Upper lobe of right lung (tissue), 1 donor: ENCODE measurements at regions of chr6 and their contacts with region 1.

Region 1: DNA sequence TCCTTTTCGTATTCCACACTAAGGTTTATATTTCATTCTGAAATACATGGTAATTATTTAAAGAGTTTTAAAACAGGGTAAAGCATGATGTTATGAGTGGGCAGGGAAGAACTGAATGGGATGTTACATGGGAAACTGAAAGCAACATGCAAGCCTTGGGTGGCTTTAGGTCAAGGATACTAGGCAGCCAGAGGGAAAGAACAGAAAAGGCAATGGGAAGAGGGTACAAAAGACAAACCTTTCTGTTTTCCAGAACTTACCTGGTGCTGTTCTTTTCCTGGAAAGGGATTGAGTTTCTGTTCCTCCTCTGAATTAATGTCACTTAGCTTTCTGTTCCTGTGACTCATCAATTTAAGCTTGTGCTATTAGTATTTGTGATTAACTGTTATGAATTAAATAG is 71.2 kb upstream of the SMIM8 start:
- DNase-seq: no peak
- ATAC-seq: no peak
- H3K4me3 ChIP-seq: no peak overlapping the region
- H3K27ac ChIP-seq: no peak overlapping the region
- H3K4me1 ChIP-seq: no peaks in the 10 kb centered on the region
- H3K27me3 ChIP-seq: no peaks in the 10 kb centered on the region
- CTCF ChIP-seq: no peak

Region 2: DNA sequence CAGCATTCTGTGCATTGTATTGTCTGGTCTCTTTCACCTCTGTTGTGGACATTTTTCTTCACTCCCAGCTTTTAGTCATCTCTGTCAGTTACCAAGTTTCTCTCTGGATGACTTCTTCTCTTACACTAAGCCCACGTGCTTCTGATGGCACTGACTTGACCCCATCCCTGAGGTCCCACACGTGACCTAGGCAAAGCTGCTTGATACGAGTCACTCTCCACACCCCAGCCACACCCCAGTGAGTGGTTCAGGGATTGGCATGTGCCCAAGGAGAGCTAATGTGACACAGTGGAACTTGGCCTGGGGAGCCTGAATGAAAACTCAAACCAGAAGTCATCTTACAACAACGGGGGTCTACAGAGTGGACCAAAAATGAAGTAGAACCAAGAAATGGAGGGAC is 281.7 kb before region 1 on chr6:
- intact Hi-C with region 1: no loop called
- DNase-seq: no peak
- ATAC-seq: no peak
- H3K4me3 ChIP-seq: no peak overlapping the region
- H3K27ac ChIP-seq: no peak overlapping the region
- H3K4me1 ChIP-seq: no peaks in the 10 kb centered on the region
- H3K27me3 ChIP-seq: no peaks in the 10 kb centered on the region
- CTCF ChIP-seq: no peak

Region 3: GRCh38 chr6:87139236-87139635 is 112.0 kb before region 1 on chr6:
- intact Hi-C with region 1: loop called (anchors 10 kb)
- DNase-seq: no peak
- ATAC-seq: peak; percentile 92
- H3K4me3 ChIP-seq: no peak overlapping the region
- H3K27ac ChIP-seq: no peak overlapping the region
- H3K4me1 ChIP-seq: no peaks in the 10 kb centered on the region
- H3K27me3 ChIP-seq: peaks cover 5% of the 10 kb centered on the region
- CTCF ChIP-seq: peak; percentile 84

Region 4: GRCh38 chr6:87291883-87292282 is 40.7 kb after region 1 on chr6:
- intact Hi-C with region 1: no loop called
- DNase-seq: no peak
- ATAC-seq: no peak
- H3K4me3 ChIP-seq: no peak overlapping the region
- H3K27ac ChIP-seq: no peak overlapping the region
- H3K4me1 ChIP-seq: no peaks in the 10 kb centered on the region
- H3K27me3 ChIP-seq: peaks cover 17% of the 10 kb centered on the region
- CTCF ChIP-seq: no peak

Region 5: GRCh38 chr6:87472525-87473418 is 221.5 kb after region 1 on chr6 and contains the start of gene SLC35A1:
- intact Hi-C with region 1: no loop called
- DNase-seq: peak; percentile 95
- ATAC-seq: peak; percentile 99
- H3K4me3 ChIP-seq: peak within 1 kb of the TSS; percentile 93
- H3K27ac ChIP-seq: peak within 1 kb of the TSS; percentile 95
- H3K4me1 ChIP-seq: peaks cover 22% of the 10 kb centered on the region
- H3K27me3 ChIP-seq: no peaks in the 10 kb centered on the region
- CTCF ChIP-seq: peak; percentile 37
- total RNA-seq, gene SLC35A1: 48.9 TPM

Region 6: GRCh38 chr6:87600576-87600975 is 349.4 kb after region 1 on chr6:
- intact Hi-C with region 1: no loop called
- DNase-seq: no peak
- ATAC-seq: no peak
- H3K4me3 ChIP-seq: no peak overlapping the region
- H3K27ac ChIP-seq: no peak overlapping the region
- H3K4me1 ChIP-seq: no peaks in the 10 kb centered on the region
- H3K27me3 ChIP-seq: no peaks in the 10 kb centered on the region
- CTCF ChIP-seq: no peak